K562 (cell line): ENCODE measurements at regions of chr3 and their contacts with region 1.

Region 1: DNA sequence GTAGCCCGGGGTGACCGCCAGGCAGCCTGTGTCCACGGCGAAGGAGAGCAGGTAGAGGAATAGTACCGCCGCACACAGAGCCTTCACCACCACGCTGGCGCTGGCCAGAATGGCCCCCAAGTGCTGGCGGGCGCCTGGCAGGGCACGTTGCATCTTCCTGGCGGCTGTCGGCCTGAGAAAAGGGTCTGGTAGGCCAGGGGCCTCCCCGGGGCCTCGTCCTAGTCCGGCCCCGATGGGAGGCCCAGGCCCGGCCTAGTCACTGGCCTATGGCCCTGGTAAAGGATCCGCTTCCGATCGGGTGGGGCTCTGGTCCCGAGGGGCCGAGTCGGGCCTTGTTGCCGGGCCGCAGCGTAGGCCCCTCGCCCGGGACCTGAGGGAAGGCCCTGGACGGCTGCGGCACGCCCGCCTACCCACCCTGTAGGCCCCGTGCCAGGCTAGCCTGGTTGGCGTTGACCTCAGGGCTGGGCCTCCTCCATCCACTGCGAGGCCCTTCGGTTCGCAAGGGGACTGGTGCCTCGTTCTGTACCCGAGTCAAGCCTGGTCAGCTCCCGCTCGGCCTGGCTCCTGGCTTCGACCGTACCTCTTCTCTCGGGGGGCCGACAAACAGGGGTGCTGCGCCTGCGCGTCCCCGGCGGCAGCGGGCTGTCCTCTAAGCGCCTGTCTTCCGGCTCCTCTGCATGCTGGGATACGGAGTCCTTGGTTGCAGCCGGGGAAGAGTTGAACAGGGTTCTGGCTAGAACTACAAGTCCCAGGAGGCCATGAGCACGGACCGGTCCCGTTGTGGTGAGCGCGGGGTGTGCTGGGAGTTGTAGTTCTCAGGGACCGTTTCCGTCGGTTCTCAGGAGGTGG is at the start of gene TMEM115:
- DNase-seq: peak; percentile 88 to 96 (median 92)
- ATAC-seq: peak; percentile 97
- H3K4me3 ChIP-seq: peak within 1 kb of the TSS; percentile 62
- H3K27ac ChIP-seq: peak within 1 kb of the TSS; percentile 78
- H3K4me1 ChIP-seq: peaks cover 29 to 39% of the 10 kb centered on the region in 2 experiments; a peak in 4 of 5 replicates
- H3K27me3 ChIP-seq: no peaks in the 10 kb centered on the region
- CTCF ChIP-seq: no peak
- EP300 ChIP-seq: no peak
- POLR2A ChIP-seq: peak; percentile 63; the same call in 1 of the 2 replicates
- RAD21 ChIP-seq: no peak
- polyA plus RNA-seq, gene TMEM115: 1.6 to 2.7 TPM

Region 2: DNA sequence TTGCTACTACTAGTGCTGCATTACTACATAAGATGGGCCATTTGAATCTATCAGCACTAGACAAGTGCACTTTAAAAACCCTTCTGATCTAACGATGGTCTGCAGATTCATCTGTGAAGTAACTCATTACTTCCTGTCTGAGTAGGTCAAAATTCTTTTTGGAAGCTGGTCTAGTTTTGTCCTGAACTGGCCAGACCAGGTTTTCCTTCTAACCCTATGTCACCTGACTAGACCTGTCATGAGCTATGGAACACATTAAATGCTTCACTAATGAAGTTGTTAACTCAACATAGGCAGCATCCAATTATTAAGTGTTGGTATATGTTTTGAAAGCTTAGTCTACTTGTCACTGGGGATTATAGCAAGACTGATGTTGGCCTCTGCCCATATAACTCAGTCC is 280.5 kb before region 1 on chr3:
- CTCF ChIA-PET with region 1: no interaction called
- POLR2A ChIA-PET with region 1: no interaction called
- in situ Hi-C with region 1: no loop called
- intact Hi-C with region 1: no loop called
- DNase-seq: no peak
- ATAC-seq: peak; percentile 64
- H3K4me3 ChIP-seq: no peak overlapping the region
- H3K27ac ChIP-seq: no peak overlapping the region
- H3K4me1 ChIP-seq: no peaks in the 10 kb centered on the region
- H3K27me3 ChIP-seq: no peaks in the 10 kb centered on the region
- CTCF ChIP-seq: no peak
- EP300 ChIP-seq: no peak
- POLR2A ChIP-seq: no peak
- RAD21 ChIP-seq: no peak

Region 3: GRCh38 chr3:50370594-50370993 is 11.5 kb after region 1 on chr3:
- CTCF ChIA-PET with region 1: no interaction called
- POLR2A ChIA-PET with region 1: interaction called, 10 read pairs
- in situ Hi-C with region 1: no loop called
- intact Hi-C with region 1: no loop called
- DNase-seq: peak in 2 of 4 experiments; percentile 49 to 73
- ATAC-seq: peak; percentile 84
- H3K4me3 ChIP-seq: no peak overlapping the region
- H3K27ac ChIP-seq: no peak overlapping the region
- H3K4me1 ChIP-seq: peaks cover 13 to 44% of the 10 kb centered on the region in 2 experiments; a peak in 4 of 5 replicates
- H3K27me3 ChIP-seq: no peaks in the 10 kb centered on the region
- CTCF ChIP-seq: peak; percentile 46 to 72 (median 55)
- EP300 ChIP-seq: no peak
- POLR2A ChIP-seq: no peak
- RAD21 ChIP-seq: peak; percentile 70 to 74